Activated B cell treated with CpG ODN at 0.5 μM for 24 hours (primary cell): ENCODE measurements at regions of chr1 and their contacts with region 1.

Region 1: GRCh38 chr1:63593303-63593885 is at the start of gene PGM1:
- DNase-seq: peak; percentile 67
- ATAC-seq: peak; percentile 79
- H3K4me3 Mint-ChIP-seq: peak within 1 kb of the TSS; percentile 97
- H3K27ac Mint-ChIP-seq: peak within 1 kb of the TSS; percentile 92
- H3K4me1 Mint-ChIP-seq: peaks cover 14% of the 10 kb centered on the region
- H3K27me3 Mint-ChIP-seq: no peaks in the 10 kb centered on the region
- CTCF ChIP-seq: no peak
- total RNA-seq, gene PGM1: 20.6 and 20.8 TPM in 2 replicates

Region 2: GRCh38 chr1:61724813-61725694 is 1868.3 kb before region 1 on chr1 and contains the start of gene TM2D1:
- CTCF ChIA-PET with region 1: no interaction called
- POLR2A ChIA-PET with region 1: no interaction called
- intact Hi-C with region 1: loop called (anchors 5 kb)
- DNase-seq: peak; percentile 81
- ATAC-seq: peak; percentile 97
- H3K4me3 Mint-ChIP-seq: peak within 1 kb of the TSS; percentile 99
- H3K27ac Mint-ChIP-seq: peak within 1 kb of the TSS; percentile 98
- H3K4me1 Mint-ChIP-seq: peaks cover 20% of the 10 kb centered on the region
- H3K27me3 Mint-ChIP-seq: no peaks in the 10 kb centered on the region
- CTCF ChIP-seq: no peak
- total RNA-seq, gene TM2D1: 33.6 and 41.4 TPM in 2 replicates

Region 3: DNA sequence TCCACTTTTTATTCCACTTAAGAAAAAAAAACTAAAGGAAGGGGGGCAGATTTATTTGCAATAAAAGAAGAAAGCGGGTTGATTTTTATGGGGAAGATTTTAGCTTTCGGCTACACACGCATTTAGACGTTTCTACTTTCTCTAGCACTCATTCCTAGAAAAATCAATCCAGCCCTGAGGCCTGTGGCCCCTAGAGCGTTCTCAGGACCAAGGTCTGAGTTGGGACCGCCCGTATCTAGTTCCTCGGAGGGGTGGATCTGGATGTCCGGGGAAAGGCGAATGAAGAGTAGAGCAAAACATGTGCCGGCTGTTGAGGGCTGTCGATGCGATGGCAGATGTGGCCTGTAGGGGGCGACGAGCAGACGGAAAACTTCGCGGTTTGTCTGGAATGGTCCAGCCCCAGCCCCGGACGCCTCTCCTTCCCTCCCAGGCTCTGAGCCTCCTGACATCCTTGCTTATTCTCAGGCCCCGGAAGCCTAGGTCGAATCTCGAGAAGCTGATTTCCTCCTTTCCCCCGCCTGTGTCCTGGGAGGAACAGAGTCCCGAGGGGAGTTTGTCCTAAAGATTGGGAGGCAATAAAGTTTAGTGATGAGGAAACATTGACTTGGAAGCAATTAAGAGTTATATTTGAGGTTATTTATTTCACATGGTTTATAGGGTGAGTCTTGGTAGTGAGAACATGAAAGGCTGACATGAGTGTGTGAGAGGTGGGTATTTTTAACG is 265.8 kb before region 1 on chr1:
- CTCF ChIA-PET with region 1: no interaction called
- POLR2A ChIA-PET with region 1: no interaction called
- intact Hi-C with region 1: loop called (anchors 5 kb)
- DNase-seq: peak; percentile 19
- ATAC-seq: no peak
- H3K4me3 Mint-ChIP-seq: no peak overlapping the region
- H3K27ac Mint-ChIP-seq: peak overlapping the region; percentile 59
- H3K4me1 Mint-ChIP-seq: peaks cover 20% of the 10 kb centered on the region
- H3K27me3 Mint-ChIP-seq: peaks cover 54% of the 10 kb centered on the region
- CTCF ChIP-seq: no peak

Region 4: DNA sequence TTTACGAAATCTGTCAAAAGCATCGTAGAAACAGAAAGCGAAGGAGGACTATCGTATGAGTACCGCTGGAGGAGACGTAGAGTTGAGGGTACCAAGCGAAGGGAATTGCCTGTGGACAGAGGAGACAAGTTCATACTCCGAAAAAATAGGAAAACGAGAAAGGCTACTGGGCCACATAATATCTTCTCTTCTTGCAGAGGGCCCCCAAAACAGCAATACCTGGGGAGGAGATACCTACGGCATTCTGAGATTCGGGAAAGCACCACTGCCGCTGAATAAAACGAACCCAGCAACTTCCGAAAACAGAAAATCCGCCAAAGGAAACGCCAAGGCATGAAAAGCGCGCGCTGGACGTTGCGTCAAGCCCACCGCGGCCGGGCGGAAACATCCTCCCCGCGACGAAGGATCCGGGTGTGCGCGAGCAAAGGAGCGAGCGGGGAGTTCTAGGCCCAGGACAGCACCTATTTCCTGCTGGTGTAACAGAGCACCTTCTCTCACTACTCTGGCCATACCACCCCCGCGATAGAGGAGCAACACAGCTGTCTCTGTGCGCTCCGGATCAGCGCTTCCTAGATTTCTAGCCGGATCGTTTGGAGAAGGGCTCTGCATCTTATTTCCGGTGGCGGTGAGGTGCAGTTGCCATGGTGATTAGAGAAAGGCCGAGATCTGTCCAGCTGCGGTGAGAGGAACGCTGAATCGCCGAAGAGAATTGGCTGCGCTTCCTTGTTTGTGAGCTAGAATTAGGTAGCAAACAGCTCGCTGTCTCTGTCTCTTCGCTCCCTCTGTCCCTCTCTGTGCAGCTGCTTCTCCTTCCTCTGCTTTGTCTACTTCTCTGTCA is 70.3 kb before region 1 on chr1 and contains the starts of genes EFCAB7 and ITGB3BP:
- CTCF ChIA-PET with region 1: no interaction called
- POLR2A ChIA-PET with region 1: interaction called, 3 read pairs
- intact Hi-C with region 1: loop called (anchors 1 kb)
- DNase-seq: peak; percentile 78
- ATAC-seq: peak; percentile 87
- H3K4me3 Mint-ChIP-seq: peak within 1 kb of the TSS; percentile 97
- H3K27ac Mint-ChIP-seq: peak within 1 kb of the TSS; percentile 98
- H3K4me1 Mint-ChIP-seq: peaks cover 22% of the 10 kb centered on the region
- H3K27me3 Mint-ChIP-seq: no peaks in the 10 kb centered on the region
- CTCF ChIP-seq: no peak
- total RNA-seq, gene EFCAB7: 7.5 and 8.6 TPM in 2 replicates
- total RNA-seq, gene ITGB3BP: 24.9 and 27.0 TPM in 2 replicates

Region 5: GRCh38 chr1:63892632-63893395 is 299.4 kb after region 1 on chr1:
- CTCF ChIA-PET with region 1: no interaction called
- POLR2A ChIA-PET with region 1: no interaction called
- intact Hi-C with region 1: loop called (anchors 5 kb)
- DNase-seq: peak; percentile 46
- ATAC-seq: peak; percentile 89
- H3K4me3 Mint-ChIP-seq: peak overlapping the region; percentile 59
- H3K27ac Mint-ChIP-seq: peak overlapping the region; percentile 83
- H3K4me1 Mint-ChIP-seq: peaks cover 53% of the 10 kb centered on the region
- H3K27me3 Mint-ChIP-seq: peaks cover 9% of the 10 kb centered on the region
- CTCF ChIP-seq: no peak